Activated T-helper 1 cell treated with anti-CD3 and anti-CD28 coated beads, Interleukin-12 subunit alpha, Interleukin-12 subunit beta, Interleukin-2, Interleukin-4 antibody, amounts not matched to agents 30 ng/mL and 10 ng/mL and 1 ng/mL, durations not matched to agents 14 hours and 24 hours and 36 hours (primary cell): ENCODE measurements at regions of chr18 and their contacts with region 1.

Region 1: DNA sequence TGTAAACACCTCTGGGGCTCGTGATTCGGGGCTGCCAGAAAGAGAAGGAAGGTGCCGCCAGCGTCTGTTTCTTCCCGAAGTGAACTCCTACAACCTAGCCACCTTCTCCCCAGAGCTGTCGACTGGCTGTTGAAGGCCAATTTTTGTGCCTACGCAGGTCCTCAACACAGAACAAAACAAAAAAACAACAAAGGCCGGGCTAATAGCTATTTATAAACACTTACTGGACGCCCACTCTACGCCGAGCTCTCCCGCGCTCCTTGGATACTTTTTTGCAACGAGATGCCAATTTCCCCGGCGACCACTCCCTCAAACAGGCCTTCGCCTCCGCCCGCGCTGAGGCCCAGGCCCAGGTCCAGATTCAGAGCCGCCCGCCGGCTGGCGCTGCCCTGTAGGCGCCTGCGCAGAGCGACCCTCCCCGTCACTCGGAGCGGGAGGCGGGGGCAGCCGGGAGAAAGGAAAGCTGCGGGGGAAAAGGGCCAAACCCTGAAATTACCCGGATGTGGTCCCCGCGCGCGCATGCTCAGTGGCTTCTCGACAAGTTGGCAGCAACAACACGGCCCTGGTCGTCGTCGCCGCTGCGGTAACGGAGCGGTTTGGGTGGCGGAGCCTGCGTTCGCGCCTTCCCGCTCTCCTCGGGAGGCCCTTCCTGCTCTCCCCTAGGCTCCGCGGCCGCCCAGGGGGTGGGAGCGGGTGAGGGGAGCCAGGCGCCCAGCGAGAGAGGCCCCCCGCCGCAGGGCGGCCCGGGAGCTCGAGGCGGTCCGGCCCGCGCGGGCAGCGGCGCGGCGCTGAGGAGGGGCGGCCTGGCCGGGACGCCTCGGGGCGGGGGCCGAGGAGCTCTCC is at the start of gene SMAD4:
- DNase-seq: peak; percentile 97
- H3K4me3 Mint-ChIP-seq: peak within 1 kb of the TSS; percentile 99
- H3K27ac Mint-ChIP-seq: peak within 1 kb of the TSS; percentile 96
- H3K4me1 Mint-ChIP-seq: peaks cover 55% of the 10 kb centered on the region
- H3K27me3 Mint-ChIP-seq: no peaks in the 10 kb centered on the region
- total RNA-seq, gene SMAD4: 84.4 and 88.7 TPM in 2 replicates

Region 2: DNA sequence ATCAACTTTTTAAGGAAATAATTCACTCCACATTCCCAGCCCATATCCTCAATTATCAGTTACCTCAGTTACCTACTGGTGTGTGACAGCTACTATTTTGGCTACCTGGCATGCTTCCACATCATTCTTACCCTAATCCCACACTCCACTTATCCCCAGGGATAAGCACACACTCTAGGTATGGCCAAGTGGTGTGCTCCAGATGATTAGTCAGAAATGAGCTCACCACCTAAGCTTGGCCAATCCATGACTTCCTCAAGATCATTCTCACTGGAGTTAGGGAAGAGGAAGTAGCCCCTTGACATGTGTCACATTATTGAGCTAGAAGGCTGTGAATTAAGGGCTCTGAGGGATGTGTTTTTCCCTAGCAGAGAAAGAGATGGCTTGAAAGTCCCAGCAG is 20.8 kb before region 1 on chr18:
- intact Hi-C with region 1: no loop called
- DNase-seq: no peak
- H3K4me3 Mint-ChIP-seq: no peak overlapping the region
- H3K27ac Mint-ChIP-seq: no peak overlapping the region
- H3K4me1 Mint-ChIP-seq: no peaks in the 10 kb centered on the region
- H3K27me3 Mint-ChIP-seq: peaks cover 5% of the 10 kb centered on the region

Region 3: DNA sequence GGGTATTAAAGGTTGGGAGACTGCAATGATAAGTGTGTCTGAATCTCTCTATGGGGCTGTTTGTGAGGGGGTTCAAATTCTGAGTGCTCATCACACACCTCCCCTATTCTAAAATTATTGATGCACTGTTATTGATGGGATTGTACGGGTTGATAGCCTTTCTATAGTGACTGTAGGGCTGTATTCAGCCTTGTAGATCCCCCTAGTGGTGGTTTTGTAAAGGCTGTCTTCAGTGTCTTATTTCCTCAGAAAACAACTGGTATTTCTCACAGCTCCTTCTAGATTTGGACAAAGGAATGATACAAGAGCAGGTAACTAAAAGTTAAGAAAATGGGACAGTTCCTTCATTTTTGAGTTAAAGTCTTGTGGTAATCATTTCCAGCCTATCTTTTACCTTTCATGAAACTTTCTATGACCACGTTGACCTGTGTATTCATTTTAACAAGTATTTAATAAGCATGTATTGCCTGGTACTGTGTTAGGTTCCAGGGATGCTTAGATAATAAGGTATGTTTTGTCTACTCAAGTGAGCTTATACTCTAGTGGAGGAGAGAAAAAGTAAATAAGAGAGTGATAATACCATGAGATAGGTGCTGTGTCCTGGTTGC is 21.3 kb after region 1 on chr18:
- intact Hi-C with region 1: loop called (anchors 1 kb)
- DNase-seq: no peak
- H3K4me3 Mint-ChIP-seq: no peak overlapping the region
- H3K27ac Mint-ChIP-seq: peak overlapping the region; percentile 16
- H3K4me1 Mint-ChIP-seq: peaks cover 39% of the 10 kb centered on the region
- H3K27me3 Mint-ChIP-seq: no peaks in the 10 kb centered on the region